ENCODE measurements at regions of chr6 and their contacts with region 1.

Region 1: GRCh38 chr6:37889051-37889450 is 69.5 kb downstream of the ZFAND3 start:
- DNase-seq: no peak
- H3K4me3 ChIP-seq: no peak overlapping the region
- H3K27ac ChIP-seq: no peak overlapping the region
- H3K4me1 ChIP-seq: peaks cover 3% of the 10 kb centered on the region
- H3K27me3 ChIP-seq: no peaks in the 10 kb centered on the region
- CTCF ChIP-seq: no peak
- POLR2A ChIP-seq: no peak

Region 2: GRCh38 chr6:37222125-37222967 is 666.7 kb before region 1 on chr6:
- intact Hi-C with region 1: no loop called
- DNase-seq: peak; percentile 84
- H3K4me3 ChIP-seq: peak overlapping the region; percentile 48 to 51
- H3K27ac ChIP-seq: peak overlapping the region; percentile 38 to 41
- H3K4me1 ChIP-seq: no peaks in the 10 kb centered on the region
- H3K27me3 ChIP-seq: no peaks in the 10 kb centered on the region
- CTCF ChIP-seq: peak in 1 of 4 experiments; percentile 7
- POLR2A ChIP-seq: peak; percentile 61

Region 3: GRCh38 chr6:37713529-37714119 is 175.4 kb before region 1 on chr6:
- intact Hi-C with region 1: no loop called
- DNase-seq: no peak
- H3K4me3 ChIP-seq: no peak overlapping the region
- H3K27ac ChIP-seq: no peak overlapping the region
- H3K4me1 ChIP-seq: no peaks in the 10 kb centered on the region
- H3K27me3 ChIP-seq: no peaks in the 10 kb centered on the region
- CTCF ChIP-seq: no peak
- POLR2A ChIP-seq: no peak

Region 4: DNA sequence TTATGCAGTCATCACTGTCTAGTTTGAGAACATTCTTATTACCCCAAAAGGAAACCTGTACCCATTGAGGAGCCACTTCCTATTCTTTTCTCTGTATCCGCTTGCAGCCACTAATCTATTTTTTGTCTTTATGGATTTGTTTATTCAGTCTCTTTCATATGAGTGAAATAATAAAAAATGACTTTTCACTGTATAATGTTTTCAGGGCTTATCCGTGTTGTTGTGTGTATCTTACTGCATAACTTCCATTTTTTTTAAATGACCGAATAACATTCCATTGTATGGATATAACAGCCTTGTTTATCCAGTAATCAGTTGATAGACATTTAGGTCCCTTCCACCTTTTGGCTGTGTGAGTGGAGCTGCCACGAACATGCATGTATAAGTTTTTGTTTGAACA is 17.1 kb after region 1 on chr6:
- intact Hi-C with region 1: loop called (anchors 2 kb)
- DNase-seq: no peak
- H3K4me3 ChIP-seq: no peak overlapping the region
- H3K27ac ChIP-seq: no peak overlapping the region
- H3K4me1 ChIP-seq: no peaks in the 10 kb centered on the region
- H3K27me3 ChIP-seq: no peaks in the 10 kb centered on the region
- CTCF ChIP-seq: no peak
- POLR2A ChIP-seq: no peak

Region 5: DNA sequence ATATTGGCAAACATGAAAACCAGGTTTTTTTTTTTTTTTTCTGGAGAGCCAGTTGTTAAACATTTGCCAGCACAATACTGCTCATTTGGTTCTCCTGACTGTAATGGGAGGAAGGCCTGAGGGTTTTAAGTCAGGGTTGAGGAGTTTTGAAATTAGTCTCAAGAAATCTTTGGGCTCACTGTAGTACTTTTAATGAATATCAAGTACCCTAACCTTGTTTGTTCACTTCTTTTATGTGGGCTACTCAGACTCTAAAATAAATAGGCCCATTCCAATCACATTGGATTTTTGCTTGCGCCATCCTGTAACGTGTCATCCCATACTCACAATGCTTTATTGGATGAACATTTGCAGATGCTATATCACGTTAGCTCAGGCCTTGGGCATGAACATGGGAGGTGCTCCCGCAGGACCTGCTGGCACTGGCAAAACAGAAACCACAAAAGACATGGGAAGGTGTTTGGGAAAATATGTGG is 972.9 kb after region 1 on chr6:
- intact Hi-C with region 1: no loop called
- DNase-seq: no peak
- H3K4me3 ChIP-seq: no peak overlapping the region
- H3K27ac ChIP-seq: no peak overlapping the region
- H3K4me1 ChIP-seq: peaks cover 5% of the 10 kb centered on the region
- H3K27me3 ChIP-seq: no peaks in the 10 kb centered on the region
- CTCF ChIP-seq: no peak
- POLR2A ChIP-seq: no peak